ENCODE measurements at regions of chr6 and their contacts with region 1.

Region 1: DNA sequence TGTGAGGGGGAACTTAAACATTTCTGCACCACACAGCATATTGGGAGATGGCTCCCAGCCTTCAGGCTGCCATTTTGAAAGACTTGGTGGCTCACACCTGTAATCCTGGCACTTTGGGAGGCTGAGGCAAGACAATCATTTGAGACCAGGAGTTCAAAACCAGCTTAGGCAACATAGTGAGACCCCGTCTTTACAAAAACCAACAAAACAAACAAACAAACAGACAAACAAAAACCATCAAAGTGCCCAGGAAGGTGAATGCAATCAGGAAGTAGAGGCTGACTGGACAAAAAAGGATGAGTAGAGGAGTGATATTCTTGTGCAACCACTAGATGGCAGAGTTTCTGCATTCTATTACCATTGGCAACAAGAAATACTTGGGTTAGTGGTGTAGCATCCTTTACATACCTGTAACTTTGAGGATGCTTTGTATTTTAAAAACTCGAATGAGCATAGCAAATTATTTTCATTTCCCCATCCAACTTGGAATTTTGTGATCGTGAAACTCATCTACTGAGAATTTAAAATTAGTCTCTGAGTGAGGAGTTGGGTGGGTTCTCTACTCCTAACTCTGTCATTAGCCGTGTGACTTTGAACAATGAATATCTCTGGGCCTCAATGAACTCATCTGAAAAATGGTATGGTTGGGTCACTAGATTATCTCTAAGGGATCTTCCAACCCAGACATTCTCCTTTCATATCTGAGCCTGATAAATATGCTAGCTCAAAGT is 84.4 kb downstream of the CRYBG1 start:
- DNase-seq: peak; percentile 52
- H3K4me3 ChIP-seq: no peak overlapping the region
- CTCF ChIP-seq: peak; percentile 70

Region 2: GRCh38 chr6:106525111-106525881 is 80.4 kb after region 1 on chr6:
- in situ Hi-C with region 1: no loop called
- DNase-seq: no peak
- H3K4me3 ChIP-seq: no peak overlapping the region
- CTCF ChIP-seq: no peak

Region 3: GRCh38 chr6:106560996-106561685 is 116.2 kb after region 1 on chr6:
- in situ Hi-C with region 1: loop called (anchors 5 kb)
- DNase-seq: peak; percentile 23
- H3K4me3 ChIP-seq: no peak overlapping the region
- CTCF ChIP-seq: no peak

Measured in astrocyte of the cerebellum (primary cell).